Breast epithelium (tissue), 4 donors: ENCODE measurements at regions of chr7 and their contacts with region 1.

Region 1: GRCh38 chr7:47536661-47537611 is 45.0 kb downstream of the TNS3 start:
- DNase-seq: peak; percentile 43 to 68
- H3K4me3 ChIP-seq: peak overlapping the region; percentile 45 to 72 (median 54)
- H3K27ac ChIP-seq: no peak overlapping the region
- H3K4me1 ChIP-seq: peaks cover 0 to 7% of the 10 kb centered on the region in 2 donors
- H3K27me3 ChIP-seq: no peaks in the 10 kb centered on the region
- CTCF ChIP-seq: no peak
- POLR2A ChIP-seq: no peak

Region 2: GRCh38 chr7:47149208-47149839 is 387.6 kb before region 1 on chr7:
- intact Hi-C with region 1: loop called (anchors 5 kb)
- DNase-seq: no peak
- H3K4me3 ChIP-seq: no peak overlapping the region
- H3K27ac ChIP-seq: no peak overlapping the region
- H3K4me1 ChIP-seq: no peaks in the 10 kb centered on the region
- H3K27me3 ChIP-seq: no peaks in the 10 kb centered on the region
- CTCF ChIP-seq: no peak
- POLR2A ChIP-seq: no peak

Region 3: DNA sequence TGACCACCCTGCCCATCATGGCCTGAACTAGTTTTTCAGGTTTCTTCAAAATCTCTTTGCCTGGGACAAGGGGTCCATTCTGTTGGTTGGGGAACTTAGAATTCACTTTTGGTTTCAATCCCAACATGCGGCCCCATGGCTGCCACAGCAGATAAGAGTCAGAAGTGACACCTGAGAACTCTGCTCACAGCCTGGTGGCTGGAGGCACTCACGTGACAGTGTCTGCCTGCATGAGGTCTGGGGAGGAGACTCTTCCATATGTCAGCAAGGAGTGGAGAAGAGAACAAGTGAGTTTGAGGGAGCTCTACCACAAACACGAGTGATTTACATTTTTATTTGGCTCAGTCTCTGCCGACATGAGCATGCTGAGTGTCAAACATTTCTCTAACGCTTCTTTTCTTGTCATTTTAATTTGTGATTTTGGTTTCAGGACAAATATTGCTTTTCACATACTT is 325.4 kb before region 1 on chr7:
- intact Hi-C with region 1: loop called (anchors 5 kb)
- DNase-seq: no peak
- H3K4me3 ChIP-seq: no peak overlapping the region
- H3K27ac ChIP-seq: no peak overlapping the region
- H3K4me1 ChIP-seq: no peaks in the 10 kb centered on the region
- H3K27me3 ChIP-seq: no peaks in the 10 kb centered on the region
- CTCF ChIP-seq: no peak
- POLR2A ChIP-seq: no peak

Region 4: GRCh38 chr7:47342296-47343060 is 194.5 kb before region 1 on chr7:
- intact Hi-C with region 1: loop called (anchors 10 kb)
- DNase-seq: no peak
- H3K4me3 ChIP-seq: no peak overlapping the region
- H3K27ac ChIP-seq: no peak overlapping the region
- H3K4me1 ChIP-seq: no peaks in the 10 kb centered on the region
- H3K27me3 ChIP-seq: no peaks in the 10 kb centered on the region
- CTCF ChIP-seq: no peak
- POLR2A ChIP-seq: no peak

Region 5: DNA sequence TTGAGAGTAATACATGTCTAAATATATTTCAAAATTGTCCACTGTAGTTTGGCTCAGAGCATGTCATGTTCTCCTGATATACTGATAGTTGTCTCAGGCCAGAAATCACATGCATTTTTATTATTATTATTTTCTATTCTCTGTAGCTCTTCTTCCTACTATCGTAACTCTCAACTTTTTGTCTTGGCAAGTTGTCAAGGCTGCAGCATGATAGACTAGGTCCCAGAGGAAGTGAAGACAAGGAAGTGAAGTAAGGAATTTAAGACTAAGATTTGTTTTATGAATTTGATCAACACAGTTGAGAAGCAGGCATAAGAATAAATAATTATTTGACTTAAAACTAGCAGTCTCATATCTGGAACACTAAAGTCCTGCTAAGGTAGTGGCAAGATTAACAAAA is 1003.8 kb after region 1 on chr7:
- intact Hi-C with region 1: no loop called
- DNase-seq: no peak
- H3K4me3 ChIP-seq: no peak overlapping the region
- H3K27ac ChIP-seq: no peak overlapping the region
- H3K4me1 ChIP-seq: no peaks in the 10 kb centered on the region
- H3K27me3 ChIP-seq: no peaks in the 10 kb centered on the region
- CTCF ChIP-seq: no peak
- POLR2A ChIP-seq: no peak